T-cell (primary cell): ENCODE measurements at regions of chr12 and their contacts with region 1.

Region 1: GRCh38 chr12:118553856-118554504 is 177.6 kb downstream of the SUDS3 start:
- DNase-seq: no peak
- ATAC-seq: no peak
- H3K4me3 ChIP-seq: no peak overlapping the region
- H3K4me3 Mint-ChIP-seq: no peak overlapping the region
- H3K27ac ChIP-seq: no peak overlapping the region
- H3K27ac Mint-ChIP-seq: no peak overlapping the region
- H3K4me1 ChIP-seq: no peaks in the 10 kb centered on the region
- H3K4me1 Mint-ChIP-seq: no peaks in the 10 kb centered on the region
- H3K27me3 ChIP-seq: peaks cover 0 to 2% of the 10 kb centered on the region in 2 experiments
- H3K27me3 Mint-ChIP-seq: peaks cover 0 to 11% of the 10 kb centered on the region in 2 donors

Region 2: DNA sequence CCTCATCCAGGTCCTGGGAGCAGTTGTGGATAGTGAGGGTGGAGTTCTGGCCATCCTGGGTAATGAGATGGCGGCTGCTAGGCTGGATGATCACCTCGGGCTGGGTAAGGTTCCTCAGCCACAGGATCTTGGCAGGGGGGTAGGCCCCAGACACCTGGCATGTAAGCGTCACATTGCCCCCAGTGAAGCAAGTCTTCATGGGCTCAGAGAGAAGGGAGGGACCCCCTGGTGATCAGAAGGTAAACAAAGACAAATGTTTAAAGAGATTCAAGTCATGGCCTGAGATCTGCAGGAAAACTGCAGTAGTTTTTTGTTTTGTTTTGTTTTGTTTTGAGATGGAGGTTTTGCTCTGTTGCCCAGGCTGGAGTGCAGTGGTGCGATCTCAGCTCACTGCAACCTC is 480.2 kb before region 1 on chr12:
- CTCF ChIA-PET with region 1: interaction called in 1 of 2 experiments, 10 read pairs
- POLR2A ChIA-PET with region 1: no interaction called
- DNase-seq: no peak
- ATAC-seq: no peak
- H3K4me3 ChIP-seq: no peak overlapping the region
- H3K4me3 Mint-ChIP-seq: no peak overlapping the region
- H3K27ac ChIP-seq: no peak overlapping the region
- H3K27ac Mint-ChIP-seq: no peak overlapping the region
- H3K4me1 ChIP-seq: no peaks in the 10 kb centered on the region
- H3K4me1 Mint-ChIP-seq: no peaks in the 10 kb centered on the region
- H3K27me3 ChIP-seq: no peaks in the 10 kb centered on the region
- H3K27me3 Mint-ChIP-seq: peaks cover 0 to 2% of the 10 kb centered on the region in 2 donors

Region 3: GRCh38 chr12:118498181-118498580 is 55.8 kb before region 1 on chr12:
- CTCF ChIA-PET with region 1: no interaction called
- POLR2A ChIA-PET with region 1: no interaction called
- DNase-seq: no peak
- ATAC-seq: no peak
- H3K4me3 ChIP-seq: no peak overlapping the region
- H3K4me3 Mint-ChIP-seq: no peak overlapping the region
- H3K27ac ChIP-seq: no peak overlapping the region
- H3K27ac Mint-ChIP-seq: no peak overlapping the region
- H3K4me1 ChIP-seq: no peaks in the 10 kb centered on the region
- H3K4me1 Mint-ChIP-seq: no peaks in the 10 kb centered on the region
- H3K27me3 ChIP-seq: peaks cover 0 to 3% of the 10 kb centered on the region in 2 experiments
- H3K27me3 Mint-ChIP-seq: peaks cover 3 to 4% of the 10 kb centered on the region in 2 donors